Activated naive CD4-positive, alpha-beta T cell treated with anti-CD3 and anti-CD28 coated beads, Interleukin-2, amount 10 ng/mL, durations not matched to agents 7 days and 5 days (primary cell): ENCODE measurements at regions of chr1 and their contacts with region 1.

Region 1: GRCh38 chr1:160768295-160768657 is 27.7 kb upstream of the LY9 start:
- DNase-seq: peak; percentile 93
- H3K4me3 Mint-ChIP-seq: peak overlapping the region; percentile 67
- H3K27ac Mint-ChIP-seq: peak overlapping the region; percentile 96
- H3K4me1 Mint-ChIP-seq: peaks cover 31% of the 10 kb centered on the region
- H3K27me3 Mint-ChIP-seq: no peaks in the 10 kb centered on the region

Region 2: DNA sequence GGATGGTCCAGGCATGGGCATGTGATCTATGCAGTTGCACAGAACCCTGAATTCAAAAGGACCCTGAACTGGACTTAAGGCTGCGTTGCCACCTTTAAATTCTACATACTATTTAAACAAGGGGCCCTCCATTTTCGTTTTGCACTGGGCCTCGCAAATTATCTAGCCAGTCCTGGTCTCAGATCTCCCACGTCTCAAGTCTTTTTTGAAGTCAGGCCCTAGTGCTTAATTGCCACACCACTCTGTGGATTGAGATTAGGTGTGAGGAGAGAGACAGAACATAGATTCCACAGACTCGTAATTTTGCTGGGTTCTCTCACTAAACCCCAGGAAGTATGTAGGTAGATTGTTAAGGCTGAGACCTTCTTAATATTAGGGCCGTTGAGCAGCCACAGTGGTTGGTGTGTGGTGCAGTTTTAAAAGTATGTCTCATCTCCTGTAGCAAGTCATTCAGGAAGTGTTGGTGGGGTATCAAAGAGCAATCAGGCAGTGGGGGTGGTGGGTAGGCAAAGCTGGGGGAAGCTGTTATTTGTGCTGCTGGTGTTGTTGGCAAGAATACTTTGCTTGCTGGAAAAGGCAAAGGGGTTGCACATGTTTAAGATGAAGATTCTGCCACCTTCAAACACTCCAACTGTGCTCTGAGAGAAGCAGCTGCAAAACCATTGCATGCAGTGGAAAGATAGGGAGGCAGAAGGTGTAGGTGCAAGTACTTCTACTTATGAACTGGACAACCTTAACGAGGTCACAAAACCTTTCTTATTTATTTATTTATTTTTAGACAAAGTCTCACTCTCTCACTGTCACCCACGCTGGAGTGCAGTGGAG is 200.2 kb before region 1 on chr1:
- CTCF ChIA-PET with region 1: no interaction called
- DNase-seq: peak; percentile 64
- H3K4me3 Mint-ChIP-seq: peak overlapping the region; percentile 5
- H3K27ac Mint-ChIP-seq: peak overlapping the region; percentile 91
- H3K4me1 Mint-ChIP-seq: peaks cover 57% of the 10 kb centered on the region
- H3K27me3 Mint-ChIP-seq: no peaks in the 10 kb centered on the region

Region 3: GRCh38 chr1:160681067-160681890 is 87.0 kb before region 1 on chr1:
- CTCF ChIA-PET with region 1: interaction called, 104 read pairs
- DNase-seq: peak; percentile 93
- H3K4me3 Mint-ChIP-seq: no peak overlapping the region
- H3K27ac Mint-ChIP-seq: peak overlapping the region; percentile 96
- H3K4me1 Mint-ChIP-seq: peaks cover 74% of the 10 kb centered on the region
- H3K27me3 Mint-ChIP-seq: no peaks in the 10 kb centered on the region

Region 4: GRCh38 chr1:160739098-160739511 is 29.2 kb before region 1 on chr1 and contains the start of gene SLAMF7:
- CTCF ChIA-PET with region 1: interaction called, 43 read pairs
- DNase-seq: no peak
- H3K4me3 Mint-ChIP-seq: peak within 1 kb of the TSS; percentile 65
- H3K27ac Mint-ChIP-seq: peak within 1 kb of the TSS; percentile 73
- H3K4me1 Mint-ChIP-seq: peaks cover 65% of the 10 kb centered on the region
- H3K27me3 Mint-ChIP-seq: no peaks in the 10 kb centered on the region

Region 5: GRCh38 chr1:160755911-160756848 is 12.1 kb before region 1 on chr1:
- CTCF ChIA-PET with region 1: interaction called, 12 read pairs
- DNase-seq: no peak
- H3K4me3 Mint-ChIP-seq: no peak overlapping the region
- H3K27ac Mint-ChIP-seq: peak overlapping the region; percentile 21
- H3K4me1 Mint-ChIP-seq: peaks cover 27% of the 10 kb centered on the region
- H3K27me3 Mint-ChIP-seq: no peaks in the 10 kb centered on the region

Region 6: GRCh38 chr1:160830321-160831153 is 62.3 kb after region 1 on chr1:
- CTCF ChIA-PET with region 1: interaction called, 37 read pairs
- DNase-seq: peak; percentile 88
- H3K4me3 Mint-ChIP-seq: no peak overlapping the region
- H3K27ac Mint-ChIP-seq: no peak overlapping the region
- H3K4me1 Mint-ChIP-seq: peaks cover 26% of the 10 kb centered on the region
- H3K27me3 Mint-ChIP-seq: no peaks in the 10 kb centered on the region

Region 7: GRCh38 chr1:161324020-161324419 is 555.7 kb after region 1 on chr1:
- CTCF ChIA-PET with region 1: no interaction called
- DNase-seq: peak; percentile 26
- H3K4me3 Mint-ChIP-seq: no peak overlapping the region
- H3K27ac Mint-ChIP-seq: no peak overlapping the region
- H3K4me1 Mint-ChIP-seq: peaks cover 6% of the 10 kb centered on the region
- H3K27me3 Mint-ChIP-seq: no peaks in the 10 kb centered on the region